Naive thymus-derived CD4-positive, alpha-beta T cell (primary cell): ENCODE measurements at regions of chr22 and their contacts with region 1.

Region 1: DNA sequence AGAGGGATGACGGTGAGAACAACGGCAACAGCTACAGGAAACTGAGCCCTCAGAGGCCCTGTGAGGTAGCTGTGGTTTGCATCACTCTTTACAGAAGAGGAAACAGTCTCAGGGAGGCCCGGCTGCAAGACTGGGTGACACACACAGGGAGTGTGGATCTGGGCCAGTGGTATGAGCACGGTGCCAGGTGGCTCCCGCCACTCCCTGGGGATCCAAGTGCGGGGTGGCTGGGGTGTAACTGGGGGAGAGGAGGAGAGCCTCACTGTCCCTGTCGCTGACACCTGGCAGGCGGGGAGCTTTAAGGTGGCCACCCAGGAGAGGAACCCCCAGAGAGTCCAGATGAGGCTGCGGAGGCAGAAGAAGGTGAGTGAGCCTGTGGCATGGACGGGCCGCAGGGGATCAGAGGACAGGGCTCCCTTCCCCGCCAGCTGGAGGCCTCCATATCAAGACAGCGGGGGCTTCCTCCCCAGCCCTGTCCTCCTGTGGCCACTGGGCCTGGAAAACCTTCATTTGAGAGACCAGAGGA is 5.6 kb downstream of the RGL4 start:
- DNase-seq: peak; percentile 60 to 91 (median 86)
- ATAC-seq: peak; percentile 99
- H3K4me3 ChIP-seq: peak overlapping the region; percentile 71
- H3K4me3 Mint-ChIP-seq: peak overlapping the region; percentile 94 to 100 (median 98)
- H3K27ac ChIP-seq: peak overlapping the region; percentile 99
- H3K27ac Mint-ChIP-seq: peak overlapping the region; percentile 99 to 100 (median 100)
- H3K4me1 ChIP-seq: peaks cover 28 to 38% of the 10 kb centered on the region in 2 donors
- H3K4me1 Mint-ChIP-seq: peaks cover 37 to 64% (median 51%) of the 10 kb centered on the region in 7 donors
- H3K27me3 ChIP-seq: no peaks in the 10 kb centered on the region
- H3K27me3 Mint-ChIP-seq: no peaks in the 10 kb centered on the region

Region 2: DNA sequence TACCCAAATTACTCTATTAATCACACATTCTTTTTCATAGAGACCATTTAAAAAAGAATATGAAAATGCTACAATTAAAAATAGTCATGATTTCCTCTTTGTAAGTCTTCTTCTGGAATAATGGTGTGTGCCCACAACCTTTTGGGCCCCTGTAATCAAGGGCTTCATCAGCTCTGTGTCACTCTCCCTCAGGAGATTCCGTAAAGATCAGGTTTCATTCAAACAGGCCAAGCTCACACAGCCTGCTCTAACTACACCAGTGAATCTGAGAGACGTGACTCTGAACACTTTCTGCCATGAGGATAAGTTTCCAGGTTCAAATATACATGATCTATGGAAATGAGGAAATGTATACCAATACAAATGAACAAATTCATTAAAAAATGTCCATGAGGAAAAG is 73.8 kb before region 1 on chr22:
- CTCF ChIA-PET with region 1: no interaction called
- POLR2A ChIA-PET with region 1: no interaction called
- intact Hi-C with region 1: no loop called
- DNase-seq: no peak
- ATAC-seq: no peak
- H3K4me3 ChIP-seq: no peak overlapping the region
- H3K4me3 Mint-ChIP-seq: no peak overlapping the region
- H3K27ac ChIP-seq: no peak overlapping the region
- H3K27ac Mint-ChIP-seq: no peak overlapping the region
- H3K4me1 ChIP-seq: no peaks in the 10 kb centered on the region
- H3K4me1 Mint-ChIP-seq: peaks cover 0 to 4% (median 3%) of the 10 kb centered on the region in 7 donors
- H3K27me3 ChIP-seq: no peaks in the 10 kb centered on the region
- H3K27me3 Mint-ChIP-seq: peaks cover 0 to 4% (median 0%) of the 10 kb centered on the region in 5 donors

Region 3: DNA sequence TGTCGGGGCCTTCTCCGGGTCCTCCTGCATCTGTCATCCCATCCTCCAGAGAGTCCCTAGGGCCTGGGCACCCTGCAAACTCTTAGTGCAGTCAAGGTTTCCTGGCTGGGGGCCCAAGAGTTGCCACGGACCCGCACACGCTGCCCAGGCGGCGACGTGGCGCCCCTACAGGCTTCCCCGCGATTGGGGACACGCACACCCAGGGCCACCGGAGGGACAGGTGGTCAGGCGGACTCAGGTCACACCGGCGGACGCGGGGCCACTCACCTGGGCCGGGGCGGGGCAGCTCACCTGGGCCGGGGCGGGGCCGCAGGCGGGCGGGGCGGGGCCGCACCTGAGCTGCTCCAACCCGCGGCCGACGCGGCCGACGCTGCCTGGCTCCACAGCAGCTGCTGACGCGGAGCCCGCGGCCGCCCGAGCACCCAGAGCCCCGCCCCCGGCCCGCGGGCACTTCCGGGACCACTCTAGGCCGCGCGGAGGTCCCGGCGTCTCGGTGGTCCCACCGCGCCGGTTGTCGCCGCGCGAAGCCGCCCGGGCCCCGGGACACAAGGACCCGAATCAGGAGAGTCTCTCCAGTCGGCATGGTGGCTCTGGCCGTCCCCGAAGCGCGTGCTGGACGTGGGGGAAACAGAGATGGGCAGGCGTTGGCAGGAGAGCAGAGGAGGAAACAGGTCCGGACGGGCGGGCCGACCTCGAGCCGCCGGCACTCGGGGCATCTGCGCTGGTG is 54.5 kb after region 1 on chr22 and contains the start of gene ZNF70:
- CTCF ChIA-PET with region 1: interaction called, 3 read pairs
- POLR2A ChIA-PET with region 1: interaction called, 5 read pairs
- intact Hi-C with region 1: loop called (anchors 1 to 5 kb)
- DNase-seq: peak; percentile 78 to 88 (median 86)
- ATAC-seq: peak; percentile 99
- H3K4me3 ChIP-seq: peak within 1 kb of the TSS; percentile 79
- H3K4me3 Mint-ChIP-seq: peak within 1 kb of the TSS; percentile 63 to 88 (median 82)
- H3K27ac ChIP-seq: peak within 1 kb of the TSS; percentile 73
- H3K27ac Mint-ChIP-seq: peak within 1 kb of the TSS; percentile 37 to 91 (median 76)
- H3K4me1 ChIP-seq: peaks cover 0 to 9% of the 10 kb centered on the region in 2 donors
- H3K4me1 Mint-ChIP-seq: peaks cover 11 to 18% (median 13%) of the 10 kb centered on the region in 7 donors
- H3K27me3 ChIP-seq: no peaks in the 10 kb centered on the region
- H3K27me3 Mint-ChIP-seq: no peaks in the 10 kb centered on the region
- total RNA-seq, gene ZNF70: 3.1 to 7.9 (median 4.0) TPM